Naive thymus-derived CD4-positive, alpha-beta T cell (primary cell): ENCODE measurements at regions of chr11 and their contacts with region 1.

Region 1: DNA sequence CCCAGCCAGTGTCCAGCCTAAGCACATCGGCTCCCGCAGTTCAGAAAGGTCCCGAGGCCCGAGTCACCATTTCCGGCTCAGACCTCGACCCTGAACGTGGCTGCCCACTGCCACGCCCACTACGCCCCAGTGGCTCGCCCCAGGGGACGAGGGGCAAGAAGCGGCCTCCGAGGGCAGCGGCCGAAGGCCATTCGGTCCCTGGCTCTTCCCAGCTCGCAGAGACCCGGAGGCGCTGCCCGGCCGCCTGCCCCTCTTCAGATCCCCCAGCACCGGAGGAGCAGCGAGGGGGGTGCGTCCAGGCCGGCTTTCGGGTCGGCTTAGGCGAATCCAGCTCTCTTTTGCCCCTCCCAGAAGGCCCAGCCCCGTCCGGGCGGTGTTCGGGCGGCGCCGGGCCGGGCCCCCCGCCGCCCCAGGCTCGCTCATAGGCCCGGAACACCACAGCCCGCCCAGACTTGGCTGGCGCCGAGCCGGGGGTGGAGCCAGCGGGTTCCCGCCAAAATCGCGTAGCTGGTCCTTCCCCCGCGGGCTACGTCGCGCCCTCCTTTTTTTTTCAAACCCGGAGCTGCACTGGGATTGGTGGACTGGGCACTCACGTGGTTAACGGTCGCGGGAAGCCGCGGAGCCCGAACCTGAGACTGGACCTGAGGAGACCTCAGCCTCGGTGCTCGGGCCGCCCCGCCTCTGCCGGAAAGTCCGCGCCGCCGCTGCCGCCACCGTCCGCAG is at the start of gene WEE1:
- DNase-seq: peak; percentile 84 to 99 (median 88)
- ATAC-seq: peak; percentile 95
- H3K4me3 ChIP-seq: peak within 1 kb of the TSS; percentile 78
- H3K4me3 Mint-ChIP-seq: peak within 1 kb of the TSS; percentile 74 to 94 (median 85)
- H3K27ac ChIP-seq: peak within 1 kb of the TSS; percentile 73
- H3K27ac Mint-ChIP-seq: peak within 1 kb of the TSS in 7 of 9 donors; percentile 43 to 91 (median 59)
- H3K4me1 ChIP-seq: peaks cover 9 to 11% of the 10 kb centered on the region in 2 donors
- H3K4me1 Mint-ChIP-seq: peaks cover 0 to 43% (median 19%) of the 10 kb centered on the region in 7 donors
- H3K27me3 ChIP-seq: peaks cover 0 to 3% of the 10 kb centered on the region in 2 donors
- H3K27me3 Mint-ChIP-seq: peaks cover 3 to 22% (median 11%) of the 10 kb centered on the region in 5 donors
- total RNA-seq, gene WEE1: 0.43 to 47.6 (median 1.9) TPM

Region 2: DNA sequence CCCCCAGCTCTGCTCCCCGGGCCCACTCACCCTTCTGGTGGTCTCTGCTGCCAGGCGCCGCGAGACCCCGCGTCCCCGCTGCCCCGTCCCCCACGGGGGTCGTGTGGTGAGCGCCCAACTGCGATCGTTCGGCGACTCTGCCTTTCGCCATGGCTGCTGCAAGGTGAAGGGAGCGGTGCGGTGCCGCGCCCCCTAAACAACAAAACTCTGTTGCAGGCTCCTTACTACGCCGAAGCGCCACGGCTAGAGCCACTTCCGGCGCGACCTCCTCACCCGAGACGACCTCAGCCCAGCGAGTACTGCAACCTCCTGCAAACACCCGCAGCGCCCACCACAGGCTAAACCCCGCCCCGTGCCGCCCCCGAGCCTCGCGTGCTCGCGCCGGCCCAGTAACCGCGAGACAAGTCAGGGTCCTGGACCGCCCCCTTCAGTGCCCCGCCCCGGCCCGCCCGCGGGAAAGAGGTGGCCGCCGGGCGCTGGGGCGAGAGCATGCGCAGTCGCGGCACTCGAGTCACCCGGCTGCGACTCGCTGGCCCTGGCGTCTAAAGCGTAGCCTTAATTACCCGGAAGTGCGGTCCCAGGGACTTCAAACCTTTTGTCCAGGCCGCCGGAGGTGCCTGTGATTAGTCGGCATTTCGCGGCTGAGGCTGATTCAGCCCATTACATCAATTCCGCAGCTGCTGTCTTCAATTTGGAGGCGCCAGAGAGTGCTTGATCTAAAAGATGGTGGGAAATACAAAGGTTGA is 258.7 kb before region 1 on chr11 and contains the start of gene TMEM41B:
- CTCF ChIA-PET with region 1: no interaction called
- POLR2A ChIA-PET with region 1: no interaction called
- intact Hi-C with region 1: loop called (anchors 1 kb)
- DNase-seq: peak; percentile 98 to 100 (median 98)
- ATAC-seq: peak; percentile 98
- H3K4me3 ChIP-seq: peak within 1 kb of the TSS; percentile 90
- H3K4me3 Mint-ChIP-seq: peak within 1 kb of the TSS; percentile 97 to 100 (median 99)
- H3K27ac ChIP-seq: peak within 1 kb of the TSS; percentile 88
- H3K27ac Mint-ChIP-seq: peak within 1 kb of the TSS; percentile 96 to 99 (median 98)
- H3K4me1 ChIP-seq: peaks cover 16 to 23% of the 10 kb centered on the region in 2 donors
- H3K4me1 Mint-ChIP-seq: peaks cover 19 to 49% (median 44%) of the 10 kb centered on the region in 7 donors
- H3K27me3 ChIP-seq: no peaks in the 10 kb centered on the region
- H3K27me3 Mint-ChIP-seq: peaks cover 6 to 29% (median 11%) of the 10 kb centered on the region in 5 donors
- total RNA-seq, gene TMEM41B: 33.9 to 73.7 (median 49.0) TPM

Region 3: DNA sequence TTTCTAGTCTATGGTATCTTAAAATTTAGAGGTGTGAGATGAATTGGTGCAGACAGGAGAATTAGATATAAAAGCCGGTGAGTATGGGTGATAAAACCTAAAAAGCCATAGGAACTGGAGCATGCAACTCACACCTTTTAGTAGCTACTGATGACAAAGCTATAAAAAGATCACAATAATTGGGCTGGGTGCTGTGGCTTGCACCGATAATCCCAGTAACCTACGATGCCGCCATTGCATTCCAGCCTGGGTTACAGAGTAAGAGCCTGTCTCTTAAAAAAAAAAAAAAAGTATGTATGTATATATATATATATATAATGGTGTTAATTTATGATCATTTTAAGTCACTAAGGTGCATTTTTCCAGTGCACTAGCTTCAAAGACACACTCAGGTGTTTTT is 17.5 kb after region 1 on chr11:
- CTCF ChIA-PET with region 1: interaction called, 3 read pairs
- POLR2A ChIA-PET with region 1: interaction called, 3 read pairs
- intact Hi-C with region 1: loop called in 1 of 2 experiments (anchors 1 kb)
- DNase-seq: no peak
- ATAC-seq: no peak
- H3K4me3 ChIP-seq: no peak overlapping the region
- H3K4me3 Mint-ChIP-seq: no peak overlapping the region
- H3K27ac ChIP-seq: no peak overlapping the region
- H3K27ac Mint-ChIP-seq: no peak overlapping the region
- H3K4me1 ChIP-seq: no peaks in the 10 kb centered on the region
- H3K4me1 Mint-ChIP-seq: peaks cover 0 to 7% (median 0%) of the 10 kb centered on the region in 7 donors
- H3K27me3 ChIP-seq: no peaks in the 10 kb centered on the region
- H3K27me3 Mint-ChIP-seq: no peaks in the 10 kb centered on the region

Region 4: GRCh38 chr11:9663699-9664275 is 90.6 kb after region 1 on chr11 and contains the start of gene SWAP70:
- CTCF ChIA-PET with region 1: no interaction called
- POLR2A ChIA-PET with region 1: no interaction called
- intact Hi-C with region 1: loop called in 1 of 2 experiments (anchors 5 kb)
- DNase-seq: peak; percentile 15 to 89 (median 48)
- ATAC-seq: peak; percentile 91
- H3K4me3 ChIP-seq: peak within 1 kb of the TSS; percentile 58
- H3K4me3 Mint-ChIP-seq: peak within 1 kb of the TSS; percentile 79 to 93 (median 87)
- H3K27ac ChIP-seq: peak within 1 kb of the TSS; percentile 9
- H3K27ac Mint-ChIP-seq: peak within 1 kb of the TSS in 8 of 9 donors; percentile 7 to 81 (median 38)
- H3K4me1 ChIP-seq: peaks cover 5 to 6% of the 10 kb centered on the region in 2 donors
- H3K4me1 Mint-ChIP-seq: peaks cover 7 to 25% (median 17%) of the 10 kb centered on the region in 7 donors
- H3K27me3 ChIP-seq: peaks cover 0 to 4% of the 10 kb centered on the region in 2 donors
- H3K27me3 Mint-ChIP-seq: peaks cover 18 to 51% (median 38%) of the 10 kb centered on the region in 5 donors
- total RNA-seq, gene SWAP70: 4.2 to 15.6 (median 7.0) TPM

Region 5: DNA sequence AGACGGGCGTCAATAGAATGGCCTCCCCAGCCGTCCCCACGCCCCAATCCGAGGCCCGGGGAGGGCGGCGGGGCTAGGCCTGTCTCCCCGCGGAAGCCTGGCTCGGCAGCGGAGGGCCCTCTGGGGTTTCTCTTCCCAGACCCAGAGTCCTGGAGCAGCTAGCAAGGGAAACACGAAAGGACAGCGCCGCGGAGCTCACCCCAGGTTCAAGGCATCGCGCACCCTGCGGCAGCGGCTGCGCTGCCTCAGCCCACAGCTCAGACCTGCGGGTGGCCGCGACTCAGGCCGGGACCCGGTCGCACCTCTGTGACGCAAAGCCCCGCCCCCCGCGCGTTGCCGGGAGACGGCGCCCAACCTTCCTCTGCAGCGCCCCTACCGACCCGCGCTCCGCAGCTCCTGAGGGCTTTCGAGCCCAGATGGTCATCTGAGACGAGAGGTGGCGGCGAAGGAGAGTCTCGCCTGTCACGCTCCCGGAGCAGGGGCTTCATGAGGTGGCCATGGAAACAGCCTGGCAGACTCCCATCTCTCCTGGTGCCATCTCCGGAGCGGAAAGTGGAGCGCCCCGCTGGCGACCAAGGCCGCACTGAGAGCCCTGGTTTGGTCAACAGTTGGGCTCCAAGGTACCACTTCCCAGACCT is 967.8 kb after region 1 on chr11 and contains the start of gene RNF141:
- CTCF ChIA-PET with region 1: no interaction called
- POLR2A ChIA-PET with region 1: no interaction called
- intact Hi-C with region 1: loop called in 1 of 2 experiments (anchors 5 kb)
- DNase-seq: peak; percentile 87 to 99 (median 94)
- ATAC-seq: peak; percentile 99
- H3K4me3 ChIP-seq: peak within 1 kb of the TSS; percentile 81
- H3K4me3 Mint-ChIP-seq: peak within 1 kb of the TSS; percentile 86 to 93 (median 90)
- H3K27ac ChIP-seq: peak within 1 kb of the TSS; percentile 90
- H3K27ac Mint-ChIP-seq: peak within 1 kb of the TSS; percentile 68 to 95 (median 86)
- H3K4me1 ChIP-seq: peaks cover 0 to 8% of the 10 kb centered on the region in 2 donors
- H3K4me1 Mint-ChIP-seq: peaks cover 9 to 37% (median 27%) of the 10 kb centered on the region in 7 donors
- H3K27me3 ChIP-seq: no peaks in the 10 kb centered on the region
- H3K27me3 Mint-ChIP-seq: no peaks in the 10 kb centered on the region
- total RNA-seq, gene RNF141: 11.9 to 22.7 (median 17.3) TPM